Endothelial cell of umbilical vein (primary cell): ENCODE measurements at regions of chr3 and their contacts with region 1.

Region 1: DNA sequence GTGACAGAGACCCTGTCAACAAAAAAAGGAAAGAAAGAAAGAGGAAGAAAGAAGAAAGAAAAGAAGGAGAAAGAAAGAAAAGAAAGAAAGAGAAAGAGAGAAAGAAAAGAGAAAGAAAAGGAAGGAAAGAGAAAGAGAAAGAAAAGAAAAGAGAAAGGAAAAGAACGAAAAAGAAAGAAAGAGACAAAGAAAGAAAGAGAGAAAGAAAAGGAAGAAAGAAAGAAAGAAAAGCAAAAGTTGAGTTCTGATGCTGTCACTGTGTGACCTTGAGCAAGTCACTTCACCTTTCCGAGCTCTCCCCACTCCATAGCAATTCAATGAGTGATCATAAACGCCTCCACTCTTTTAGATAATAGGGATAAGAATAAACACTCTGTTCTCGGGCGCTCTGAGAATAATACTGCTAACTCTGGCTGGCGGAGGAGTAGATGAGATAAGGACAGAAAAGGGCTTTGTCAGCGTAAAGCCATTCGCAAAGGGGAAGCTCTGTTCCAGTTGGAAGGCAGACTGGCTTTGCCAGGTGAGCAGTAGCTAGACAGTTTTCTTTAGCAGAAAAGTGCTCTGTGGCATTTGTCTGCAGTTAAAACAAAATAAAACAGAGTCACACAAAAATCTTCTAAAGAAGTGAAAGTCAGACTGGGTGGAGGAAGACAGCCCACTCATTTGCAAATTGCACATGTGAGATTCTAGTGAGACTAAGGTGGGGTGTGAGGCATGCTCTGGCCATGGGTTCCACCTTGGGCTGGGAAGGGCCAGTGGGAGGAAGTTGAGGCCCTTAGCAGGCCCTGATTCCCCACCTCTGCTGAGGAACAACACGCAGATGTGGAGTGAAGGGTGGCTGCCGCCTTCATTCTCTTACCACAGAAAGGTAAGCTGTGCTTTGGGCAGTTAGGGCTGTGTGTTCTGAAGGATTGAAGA is 9.6 kb upstream of the FLNB start:
- DNase-seq: peak; percentile 54
- H3K4me3 ChIP-seq: no peak overlapping the region
- H3K27ac ChIP-seq: no peak overlapping the region
- H3K4me1 ChIP-seq: peaks cover 10% of the 10 kb centered on the region
- H3K27me3 ChIP-seq: no peaks in the 10 kb centered on the region
- CTCF ChIP-seq: no peak
- POLR2A ChIP-seq: no peak

Region 2: GRCh38 chr3:57961828-57962447 is 36.7 kb before region 1 on chr3:
- CTCF ChIA-PET with region 1: interaction called, 16 read pairs
- POLR2A ChIA-PET with region 1: no interaction called
- dilution Hi-C with region 1: no loop called
- intact Hi-C with region 1: no loop called
- DNase-seq: peak; percentile 58
- H3K4me3 ChIP-seq: no peak overlapping the region
- H3K27ac ChIP-seq: no peak overlapping the region
- H3K4me1 ChIP-seq: peaks cover 17% of the 10 kb centered on the region
- H3K27me3 ChIP-seq: no peaks in the 10 kb centered on the region
- CTCF ChIP-seq: peak; percentile 30 to 65
- POLR2A ChIP-seq: no peak